Activated CD8-positive, alpha-beta T cell treated with anti-CD3 and anti-CD28 coated beads, Interleukin-2, amount 10 ng/mL, durations not matched to agents 7 days and 5 days (primary cell): ENCODE measurements at regions of chr22 and their contacts with region 1.

Region 1: GRCh38 chr22:40525249-40525884 is 111.2 kb downstream of the MRTFA start:
- DNase-seq: peak; percentile 79
- ATAC-seq: peak; percentile 82
- H3K4me3 Mint-ChIP-seq: no peak overlapping the region
- H3K27ac Mint-ChIP-seq: no peak overlapping the region
- H3K4me1 Mint-ChIP-seq: peaks cover 20% of the 10 kb centered on the region
- H3K27me3 Mint-ChIP-seq: no peaks in the 10 kb centered on the region

Region 2: GRCh38 chr22:40487663-40488249 is 37.6 kb before region 1 on chr22:
- CTCF ChIA-PET with region 1: interaction called, 10 read pairs
- POLR2A ChIA-PET with region 1: no interaction called
- DNase-seq: peak; percentile 29
- ATAC-seq: peak; percentile 62
- H3K4me3 Mint-ChIP-seq: no peak overlapping the region
- H3K27ac Mint-ChIP-seq: no peak overlapping the region
- H3K4me1 Mint-ChIP-seq: peaks cover 34% of the 10 kb centered on the region
- H3K27me3 Mint-ChIP-seq: no peaks in the 10 kb centered on the region

Region 3: GRCh38 chr22:40512426-40513136 is 12.8 kb before region 1 on chr22:
- CTCF ChIA-PET with region 1: interaction called, 10 read pairs
- POLR2A ChIA-PET with region 1: interaction called, 3 read pairs
- DNase-seq: no peak
- ATAC-seq: no peak
- H3K4me3 Mint-ChIP-seq: no peak overlapping the region
- H3K27ac Mint-ChIP-seq: no peak overlapping the region
- H3K4me1 Mint-ChIP-seq: peaks cover under 1% of the 10 kb centered on the region
- H3K27me3 Mint-ChIP-seq: no peaks in the 10 kb centered on the region

Region 4: GRCh38 chr22:40567106-40567505 is 41.7 kb after region 1 on chr22:
- CTCF ChIA-PET with region 1: no interaction called
- POLR2A ChIA-PET with region 1: no interaction called
- DNase-seq: no peak
- ATAC-seq: no peak
- H3K4me3 Mint-ChIP-seq: no peak overlapping the region
- H3K27ac Mint-ChIP-seq: no peak overlapping the region
- H3K4me1 Mint-ChIP-seq: no peaks in the 10 kb centered on the region
- H3K27me3 Mint-ChIP-seq: no peaks in the 10 kb centered on the region

Region 5: DNA sequence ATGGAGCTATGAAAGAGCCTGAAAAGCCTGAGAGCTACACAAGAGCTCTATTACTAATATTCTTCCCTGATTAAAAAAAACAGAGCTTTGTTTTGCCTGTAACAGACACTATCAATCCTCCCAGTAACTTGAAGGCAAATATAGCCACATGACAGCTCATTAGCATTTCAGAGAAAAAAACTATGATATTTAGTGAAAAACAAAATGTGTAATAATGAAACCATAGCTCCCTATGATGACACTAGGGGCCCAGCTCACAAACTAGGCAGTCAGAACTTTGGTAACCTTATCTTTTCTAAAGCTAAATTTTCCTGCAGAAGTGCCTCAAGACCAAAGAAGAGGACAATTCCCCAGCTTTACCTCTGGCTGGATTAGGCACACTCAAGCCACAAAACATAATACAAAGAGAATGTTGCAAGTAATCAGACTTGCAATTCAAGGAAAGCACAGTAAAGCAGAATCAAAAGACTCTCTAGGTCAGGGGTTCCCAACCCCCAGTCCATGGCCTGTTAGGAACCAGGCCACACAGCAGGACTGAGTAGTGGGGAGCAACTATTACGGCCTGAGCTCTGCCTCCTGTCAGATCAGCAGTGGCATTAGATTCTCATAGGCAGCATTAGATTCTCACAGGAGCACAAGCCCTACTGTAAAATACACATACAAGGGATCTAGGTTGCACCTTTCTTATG is 57.8 kb after region 1 on chr22:
- CTCF ChIA-PET with region 1: interaction called, 13 read pairs
- POLR2A ChIA-PET with region 1: interaction called, 4 read pairs
- DNase-seq: no peak
- ATAC-seq: no peak
- H3K4me3 Mint-ChIP-seq: no peak overlapping the region
- H3K27ac Mint-ChIP-seq: no peak overlapping the region
- H3K4me1 Mint-ChIP-seq: peaks cover 19% of the 10 kb centered on the region
- H3K27me3 Mint-ChIP-seq: no peaks in the 10 kb centered on the region

Region 6: DNA sequence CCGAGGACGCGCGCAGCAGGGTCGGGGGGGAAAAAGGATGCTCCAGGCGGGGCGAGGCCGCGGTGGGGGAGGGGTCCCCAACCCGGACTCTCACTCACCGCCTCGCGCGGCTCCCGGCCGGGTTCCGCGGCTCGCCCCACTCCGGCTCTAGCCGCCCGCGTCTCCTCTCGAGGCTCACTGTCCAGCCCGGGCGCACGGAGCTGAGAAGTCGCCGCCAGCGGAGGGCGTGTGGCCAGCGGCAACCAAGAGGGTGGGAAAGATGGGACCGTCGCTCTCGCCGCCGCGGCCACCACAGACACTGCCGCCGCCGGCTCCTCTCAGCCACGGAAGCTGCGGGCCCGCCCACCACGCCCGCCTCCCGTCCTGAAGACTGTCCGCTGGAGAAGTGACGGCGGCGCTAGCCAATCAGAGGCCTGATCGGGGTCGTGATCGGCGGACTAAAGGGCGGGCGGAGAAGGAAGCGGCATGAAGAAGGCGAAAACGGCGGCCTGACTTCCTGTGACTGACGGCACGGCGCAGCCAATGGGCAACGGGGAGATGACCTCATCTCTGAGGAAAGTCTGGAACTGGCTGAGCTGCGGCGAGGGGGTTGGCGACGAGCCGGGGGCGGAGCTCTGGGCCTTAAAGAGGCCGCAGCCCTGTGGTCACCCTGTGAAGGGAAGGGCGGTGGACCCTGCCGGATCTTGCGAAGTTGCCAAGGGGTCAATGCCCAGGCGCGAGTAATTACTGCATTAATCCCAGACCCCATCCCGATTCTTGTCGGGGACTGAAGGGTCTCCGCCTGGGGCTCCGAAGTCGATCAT is 111.2 kb after region 1 on chr22 and contains the start of gene MRTFA:
- CTCF ChIA-PET with region 1: interaction called, 24 read pairs
- POLR2A ChIA-PET with region 1: interaction called, 41 read pairs
- DNase-seq: peak; percentile 100
- ATAC-seq: peak; percentile 97
- H3K4me3 Mint-ChIP-seq: peak within 1 kb of the TSS; percentile 94
- H3K27ac Mint-ChIP-seq: peak within 1 kb of the TSS; percentile 96
- H3K4me1 Mint-ChIP-seq: peaks cover 25% of the 10 kb centered on the region
- H3K27me3 Mint-ChIP-seq: no peaks in the 10 kb centered on the region
- total RNA-seq, gene MRTFA: 65.0 to 65.1 TPM